ENCODE measurements at regions of chr18 and their contacts with region 1.

Region 1: GRCh38 chr18:13660510-13660909 is 65.8 kb downstream of the FAM210A start:
- DNase-seq: no peak
- H3K4me3 ChIP-seq: no peak overlapping the region
- H3K27ac ChIP-seq: no peak overlapping the region
- H3K4me1 ChIP-seq: no peaks in the 10 kb centered on the region
- H3K27me3 ChIP-seq: no peaks in the 10 kb centered on the region
- CTCF ChIP-seq: no peak
- POLR2A ChIP-seq: no peak

Region 2: DNA sequence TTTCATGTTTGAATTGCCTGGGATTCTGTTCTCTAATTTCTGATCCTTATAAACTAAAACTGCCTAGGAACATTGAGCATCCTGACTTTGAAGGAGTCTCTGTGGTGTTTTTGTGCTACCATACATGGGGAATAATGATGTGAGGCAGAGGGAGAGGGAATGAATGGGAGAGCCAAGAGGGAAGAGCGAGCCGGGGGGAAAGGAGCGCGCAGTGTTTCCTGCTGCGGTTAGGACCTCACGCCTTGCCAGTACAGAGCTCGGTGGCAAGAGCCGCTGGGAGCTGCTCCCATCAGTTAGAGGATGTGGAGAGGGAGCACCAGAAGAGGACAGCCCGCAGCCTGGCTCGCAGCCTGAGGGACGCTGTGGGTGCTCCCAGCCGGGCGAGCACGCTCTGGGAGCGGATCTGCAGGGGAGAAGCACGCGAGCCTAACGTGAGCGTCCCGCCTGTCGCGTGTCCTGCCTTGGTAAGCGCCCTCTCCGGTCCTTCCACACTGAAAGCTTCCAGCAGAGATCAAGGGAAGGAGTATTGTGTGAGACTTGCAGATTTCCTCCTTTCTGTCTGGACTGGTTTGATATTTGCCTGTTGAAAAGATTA is 48.8 kb before region 1 on chr18:
- intact Hi-C with region 1: loop called (anchors 10 kb)
- DNase-seq: no peak
- H3K4me3 ChIP-seq: peak overlapping the region; percentile 22 to 23
- H3K27ac ChIP-seq: peak overlapping the region; percentile 38 to 48
- H3K4me1 ChIP-seq: no peaks in the 10 kb centered on the region
- H3K27me3 ChIP-seq: no peaks in the 10 kb centered on the region
- CTCF ChIP-seq: no peak
- POLR2A ChIP-seq: no peak